Heart right ventricle (tissue), 16 donors: ENCODE measurements at regions of chr4 and their contacts with region 1.

Region 1: GRCh38 chr4:38562751-38563198 is 101.2 kb upstream of the KLF3 start:
- DNase-seq: peak; percentile 37 to 67
- ATAC-seq: peak; percentile 77 to 97 (median 88)
- H3K4me3 ChIP-seq: no peak overlapping the region
- H3K27ac ChIP-seq: peak overlapping the region in 8 of 10 donors; percentile 6 to 67 (median 46)
- H3K4me1 ChIP-seq: peaks cover 0 to 44% (median 27%) of the 10 kb centered on the region in 9 donors
- H3K27me3 ChIP-seq: no peaks in the 10 kb centered on the region
- CTCF ChIP-seq: no peak

Region 2: GRCh38 chr4:38523524-38524448 is 39.0 kb before region 1 on chr4:
- intact Hi-C with region 1: no loop called
- DNase-seq: no peak
- ATAC-seq: peak in 5 of 8 donors; percentile 46 to 64 (median 61)
- H3K4me3 ChIP-seq: peak overlapping the region in 1 of 10 donors; percentile 16
- H3K27ac ChIP-seq: peak overlapping the region in 1 of 10 donors; percentile 85
- H3K4me1 ChIP-seq: peaks cover 0 to 44% (median 0%) of the 10 kb centered on the region in 9 donors
- H3K27me3 ChIP-seq: no peaks in the 10 kb centered on the region
- CTCF ChIP-seq: no peak

Region 3: GRCh38 chr4:38663801-38664705 is 101.3 kb after region 1 on chr4 and contains the start of gene KLF3:
- intact Hi-C with region 1: loop called in 1 of 10 experiments (anchors 2 kb)
- DNase-seq: peak; percentile 93 to 97
- ATAC-seq: peak; percentile 82 to 94 (median 86)
- H3K4me3 ChIP-seq: peak within 1 kb of the TSS; percentile 72 to 94 (median 90)
- H3K27ac ChIP-seq: peak within 1 kb of the TSS; percentile 99 to 100 (median 100)
- H3K4me1 ChIP-seq: peaks cover under 1 to 57% (median 45%) of the 10 kb centered on the region in 9 donors
- H3K27me3 ChIP-seq: no peaks in the 10 kb centered on the region
- CTCF ChIP-seq: no peak
- total RNA-seq, gene KLF3: 14.1 to 25.1 (median 20.0) TPM